ENCODE measurements at regions of chr9 and their contacts with region 1.

Region 1: DNA sequence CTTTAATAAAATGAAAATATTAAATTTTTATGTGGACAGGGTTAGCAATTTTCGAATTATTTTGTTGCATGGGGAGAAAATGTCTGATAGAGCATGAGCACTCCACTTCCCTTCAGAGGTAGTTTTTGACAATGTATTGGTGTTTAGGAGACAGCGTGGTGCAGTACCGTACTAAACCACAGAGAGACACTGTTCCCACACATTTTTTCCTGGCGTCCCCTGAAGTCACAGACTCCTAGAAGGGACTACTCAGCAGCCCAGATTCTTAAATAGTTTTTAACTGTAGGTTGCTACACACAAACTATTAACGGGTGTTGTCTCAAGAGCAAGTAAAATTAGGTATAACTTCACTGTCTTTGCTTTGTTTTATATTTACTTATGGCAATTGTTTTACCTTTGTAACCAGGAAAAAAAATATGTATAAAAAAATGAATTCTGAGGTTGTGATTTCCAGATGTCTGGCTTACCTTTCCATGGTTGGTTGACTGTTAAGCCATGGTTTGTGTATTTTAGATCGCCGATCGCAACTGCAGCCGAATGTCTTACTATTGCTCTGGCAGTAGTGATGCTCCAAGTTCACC is 171.2 kb downstream of the DOCK8 start:
- DNase-seq: peak; percentile 34
- ATAC-seq: peak; percentile 80
- H3K4me3 Mint-ChIP-seq: no peak overlapping the region
- H3K27ac Mint-ChIP-seq: no peak overlapping the region
- H3K4me1 Mint-ChIP-seq: no peaks in the 10 kb centered on the region
- H3K27me3 Mint-ChIP-seq: no peaks in the 10 kb centered on the region

Region 2: DNA sequence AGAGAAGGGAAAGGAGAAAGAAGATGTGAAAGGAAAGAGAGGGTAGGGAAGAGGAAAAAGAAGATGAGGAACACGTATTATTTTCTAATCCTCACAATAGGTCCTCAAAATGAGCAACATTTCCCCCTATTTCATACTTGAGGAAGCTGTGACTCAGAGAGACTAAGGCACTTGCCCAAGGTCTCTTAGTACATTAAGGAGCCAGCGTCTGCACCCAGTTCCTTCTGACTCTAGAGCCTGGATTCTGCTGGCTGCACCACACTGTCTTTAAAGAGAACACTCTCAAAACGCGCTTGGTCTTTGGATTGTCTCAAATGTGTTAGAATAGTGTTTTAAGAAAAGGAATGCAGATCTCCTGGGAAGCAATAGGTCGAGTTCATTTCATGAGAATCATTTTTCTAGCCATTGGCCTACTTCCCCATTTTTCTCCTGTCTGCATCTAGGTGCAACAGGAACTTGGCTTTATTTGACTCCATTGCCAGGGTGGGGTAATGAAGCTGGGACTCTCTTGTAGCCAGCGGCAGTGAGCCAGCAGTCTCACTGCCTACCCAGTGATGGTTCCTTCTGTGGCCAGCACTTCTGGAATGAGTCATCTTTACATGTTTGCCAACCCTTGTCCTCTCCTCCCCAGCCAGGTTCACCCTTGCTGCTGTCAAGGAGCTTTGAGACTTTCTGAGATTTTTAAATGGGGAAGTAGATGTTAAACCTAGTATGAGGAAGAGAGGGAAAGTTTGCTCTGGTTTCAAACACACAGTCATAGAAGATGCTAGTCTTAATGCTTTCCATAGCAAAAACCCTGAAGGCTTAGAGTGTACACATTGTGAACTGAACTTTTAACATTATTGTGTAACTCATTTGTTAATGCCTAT is 88.6 kb before region 1 on chr9:
- CTCF ChIA-PET with region 1: no interaction called
- POLR2A ChIA-PET with region 1: no interaction called
- intact Hi-C with region 1: no loop called
- DNase-seq: peak; percentile 43
- ATAC-seq: peak; percentile 89
- H3K4me3 Mint-ChIP-seq: no peak overlapping the region
- H3K27ac Mint-ChIP-seq: peak overlapping the region; percentile 82
- H3K4me1 Mint-ChIP-seq: peaks cover 40% of the 10 kb centered on the region
- H3K27me3 Mint-ChIP-seq: no peaks in the 10 kb centered on the region

Region 3: GRCh38 chr9:806285-807156 is 420.6 kb after region 1 on chr9:
- CTCF ChIA-PET with region 1: no interaction called
- POLR2A ChIA-PET with region 1: no interaction called
- intact Hi-C with region 1: loop called in 1 of 2 experiments (anchors 10 kb)
- DNase-seq: peak; percentile 9
- ATAC-seq: no peak
- H3K4me3 Mint-ChIP-seq: no peak overlapping the region
- H3K27ac Mint-ChIP-seq: no peak overlapping the region
- H3K4me1 Mint-ChIP-seq: no peaks in the 10 kb centered on the region
- H3K27me3 Mint-ChIP-seq: peaks cover 3% of the 10 kb centered on the region

Region 4: GRCh38 chr9:1009101-1009707 is 623.3 kb after region 1 on chr9:
- CTCF ChIA-PET with region 1: no interaction called
- POLR2A ChIA-PET with region 1: no interaction called
- intact Hi-C with region 1: loop called in 1 of 2 experiments (anchors 5 kb)
- DNase-seq: peak; percentile 85
- ATAC-seq: peak; percentile 98
- H3K4me3 Mint-ChIP-seq: no peak overlapping the region
- H3K27ac Mint-ChIP-seq: no peak overlapping the region
- H3K4me1 Mint-ChIP-seq: peaks cover 2% of the 10 kb centered on the region
- H3K27me3 Mint-ChIP-seq: peaks cover 36% of the 10 kb centered on the region

Measured in activated CD4-positive, alpha-beta T cell treated with anti-CD3 and anti-CD28 coated beads for 36 hours (primary cell).